Activated CD4-positive, alpha-beta T cell treated with anti-CD3 and anti-CD28 coated beads, Interleukin-2, amount 10 ng/mL, durations not matched to agents 24 days and 14 days (primary cell): ENCODE measurements at regions of chr22 and their contacts with region 1.

Region 1: DNA sequence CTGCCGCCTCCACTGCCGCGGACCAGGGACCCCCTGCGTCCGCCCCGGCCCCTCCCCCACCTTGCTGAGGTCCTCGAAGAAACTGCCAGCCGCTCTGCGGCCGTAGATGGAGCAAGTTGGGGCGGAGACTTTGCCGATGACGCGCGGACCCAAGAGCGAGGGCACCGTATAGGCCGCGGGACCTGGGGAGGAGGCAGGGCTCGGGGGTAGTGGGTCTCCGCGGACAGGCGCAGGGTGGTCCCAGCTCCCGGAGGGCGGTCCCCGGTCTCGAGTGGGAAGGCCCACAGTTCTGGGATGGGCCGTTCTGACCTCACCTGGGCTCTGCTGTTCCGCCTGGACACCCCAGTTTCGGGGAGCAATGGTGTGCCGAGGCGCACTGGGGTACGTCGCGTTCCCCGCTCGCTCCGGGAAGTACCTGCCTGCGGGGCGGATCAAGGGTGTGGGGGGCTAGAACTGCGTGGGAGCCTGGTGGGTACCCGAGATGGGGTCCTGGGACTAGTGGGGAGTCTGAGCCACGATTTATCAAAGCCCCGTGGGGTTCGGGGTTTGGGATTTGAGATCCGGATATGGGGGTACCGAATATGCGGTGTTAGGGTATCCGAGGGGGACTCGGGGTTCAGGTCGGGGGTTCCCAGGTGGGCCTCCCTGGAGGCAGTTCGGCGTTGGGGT is 1.2 kb upstream of the TYMP start:
- DNase-seq: peak; percentile 96
- H3K4me3 Mint-ChIP-seq: peak overlapping the region; percentile 96
- H3K27ac Mint-ChIP-seq: peak overlapping the region; percentile 100
- H3K4me1 Mint-ChIP-seq: peaks cover 47% of the 10 kb centered on the region
- H3K27me3 Mint-ChIP-seq: no peaks in the 10 kb centered on the region

Region 2: DNA sequence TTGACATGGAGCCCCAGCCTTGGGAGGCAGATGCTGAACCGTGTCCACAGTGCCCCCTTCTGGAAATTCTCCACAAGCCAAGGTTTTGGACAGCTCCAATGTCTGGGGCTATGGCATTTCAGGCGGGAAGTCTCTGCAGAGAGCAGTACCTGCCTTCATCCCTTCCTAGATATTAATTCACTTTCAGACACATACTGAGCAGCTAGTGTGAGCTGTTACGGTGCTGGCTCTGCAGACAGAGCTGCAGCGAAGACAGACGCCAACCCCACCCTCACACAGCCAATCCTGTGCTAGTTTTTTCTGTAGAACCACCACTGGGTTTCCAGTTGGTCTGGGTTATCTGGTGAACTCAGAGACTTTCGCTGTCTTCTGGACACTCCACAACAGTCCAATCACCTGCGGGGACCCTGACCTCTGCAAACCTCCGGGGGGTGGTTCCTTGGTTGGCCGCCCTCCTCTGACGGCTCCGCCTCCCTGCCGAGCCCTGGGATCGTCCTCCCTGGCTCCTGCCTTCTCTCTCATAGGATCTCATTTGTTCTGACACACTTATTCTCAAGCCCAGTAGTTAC is 32.6 kb before region 1 on chr22:
- intact Hi-C with region 1: no loop called
- DNase-seq: peak; percentile 93
- H3K4me3 Mint-ChIP-seq: no peak overlapping the region
- H3K27ac Mint-ChIP-seq: no peak overlapping the region
- H3K4me1 Mint-ChIP-seq: peaks cover 6% of the 10 kb centered on the region
- H3K27me3 Mint-ChIP-seq: peaks cover 5% of the 10 kb centered on the region

Region 3: GRCh38 chr22:50544078-50544745 is 13.2 kb after region 1 on chr22:
- intact Hi-C with region 1: loop called (anchors 1 kb)
- DNase-seq: peak; percentile 95
- H3K4me3 Mint-ChIP-seq: peak overlapping the region; percentile 72
- H3K27ac Mint-ChIP-seq: peak overlapping the region; percentile 86
- H3K4me1 Mint-ChIP-seq: peaks cover 56% of the 10 kb centered on the region
- H3K27me3 Mint-ChIP-seq: no peaks in the 10 kb centered on the region

Region 4: DNA sequence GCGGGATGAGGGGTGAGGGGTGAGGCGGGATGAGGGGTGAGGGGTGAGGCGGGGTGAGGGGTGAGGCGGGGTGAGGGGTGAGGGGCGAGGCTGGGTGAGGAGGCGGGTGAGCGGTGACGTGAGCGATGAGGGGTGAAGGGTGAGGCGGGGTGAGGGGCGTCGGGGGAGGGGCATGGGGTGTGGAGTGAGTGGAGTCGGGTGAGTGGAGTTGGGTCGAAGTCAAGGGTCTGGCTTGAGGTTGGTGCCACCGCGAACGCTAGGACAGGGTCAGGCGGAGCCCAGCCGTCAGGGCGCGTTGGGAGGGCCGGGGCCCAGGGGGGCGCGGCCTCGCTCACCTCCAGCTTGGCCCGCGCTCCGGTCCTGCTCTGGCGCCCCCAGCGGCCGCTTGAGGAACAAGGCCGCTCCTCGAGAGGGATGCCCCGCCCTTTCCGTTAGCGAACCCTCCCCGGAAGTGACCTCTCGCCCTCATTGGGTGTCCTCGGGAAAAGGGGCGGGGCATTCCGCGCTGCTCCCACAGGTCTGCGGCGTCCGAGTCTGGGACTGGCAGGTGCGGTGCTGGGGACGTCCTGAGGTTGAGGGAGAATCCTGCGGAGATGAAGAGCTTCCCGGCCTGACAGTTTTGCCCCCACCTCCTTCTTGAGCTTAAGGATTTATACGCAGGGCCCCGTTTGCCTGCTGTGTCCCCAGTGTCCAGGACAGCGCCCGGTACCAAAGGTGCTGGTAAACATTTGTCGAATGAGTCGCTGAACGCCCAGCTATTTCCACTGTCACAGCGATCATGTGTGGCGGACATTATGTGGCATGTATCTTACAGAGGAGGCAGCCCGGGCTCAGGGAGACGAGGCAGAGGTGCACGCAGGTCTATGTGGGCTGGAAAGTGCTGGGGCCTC is 31.8 kb after region 1 on chr22 and contains the start of gene SYCE3:
- intact Hi-C with region 1: loop called (anchors 1 kb)
- DNase-seq: peak; percentile 100
- H3K4me3 Mint-ChIP-seq: peak within 1 kb of the TSS; percentile 94
- H3K27ac Mint-ChIP-seq: peak within 1 kb of the TSS; percentile 85
- H3K4me1 Mint-ChIP-seq: peaks cover 21% of the 10 kb centered on the region
- H3K27me3 Mint-ChIP-seq: peaks cover 14% of the 10 kb centered on the region
- total RNA-seq, gene SYCE3: 0.69 TPM in 1 of 2 replicates, not detected in the other